K562 (cell line): ENCODE measurements at regions of chr5 and their contacts with region 1.

Region 1: DNA sequence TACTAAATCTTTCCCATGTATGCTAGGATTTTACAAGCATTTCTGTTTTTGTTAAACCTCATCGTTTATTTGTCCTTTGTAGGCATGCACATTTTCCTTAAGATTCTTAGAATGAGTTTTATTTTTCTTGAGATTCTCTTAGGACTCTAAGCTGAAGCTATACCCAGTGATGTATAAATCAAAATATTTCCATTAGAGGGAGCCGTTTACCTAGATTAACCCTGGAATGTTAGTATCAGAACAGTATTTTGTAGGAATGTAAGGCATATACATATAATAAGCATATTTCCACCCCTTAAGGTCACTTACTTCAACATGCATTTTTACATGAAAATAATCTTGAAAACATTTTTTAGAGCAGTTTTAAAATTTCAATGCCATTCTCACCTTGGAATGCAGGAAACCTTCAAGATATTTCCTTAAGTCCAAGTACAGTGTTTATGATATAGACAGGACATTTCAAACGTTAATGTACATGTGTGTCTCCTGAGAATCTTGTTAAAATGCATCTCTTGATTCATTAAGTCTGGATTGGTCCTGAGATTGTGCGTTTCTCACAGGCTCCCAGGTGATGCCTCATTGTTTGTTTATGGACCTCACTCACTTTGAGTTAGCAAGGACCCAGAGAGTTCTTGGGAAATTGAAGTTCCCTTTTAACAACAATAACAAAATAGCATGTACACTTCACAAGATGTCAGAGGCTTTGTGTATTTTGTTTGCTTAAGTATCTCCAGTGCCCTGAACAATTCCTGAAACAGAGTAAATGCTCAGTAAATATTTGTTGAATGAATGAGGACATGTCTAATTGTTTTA is 34.9 kb upstream of the FCHO2 start:
- DNase-seq: peak in 2 of 4 experiments; percentile 36 to 37
- ATAC-seq: peak; percentile 91
- H3K4me3 ChIP-seq: no peak overlapping the region
- H3K27ac ChIP-seq: no peak overlapping the region
- H3K4me1 ChIP-seq: no peaks in the 10 kb centered on the region
- H3K27me3 ChIP-seq: no peaks in the 10 kb centered on the region
- CTCF ChIP-seq: peak in 2 of 3 experiments; percentile 32 to 74; a peak in 3 of 6 replicates
- EP300 ChIP-seq: no peak
- POLR2A ChIP-seq: no peak
- RAD21 ChIP-seq: peak; percentile 72 to 89

Region 2: DNA sequence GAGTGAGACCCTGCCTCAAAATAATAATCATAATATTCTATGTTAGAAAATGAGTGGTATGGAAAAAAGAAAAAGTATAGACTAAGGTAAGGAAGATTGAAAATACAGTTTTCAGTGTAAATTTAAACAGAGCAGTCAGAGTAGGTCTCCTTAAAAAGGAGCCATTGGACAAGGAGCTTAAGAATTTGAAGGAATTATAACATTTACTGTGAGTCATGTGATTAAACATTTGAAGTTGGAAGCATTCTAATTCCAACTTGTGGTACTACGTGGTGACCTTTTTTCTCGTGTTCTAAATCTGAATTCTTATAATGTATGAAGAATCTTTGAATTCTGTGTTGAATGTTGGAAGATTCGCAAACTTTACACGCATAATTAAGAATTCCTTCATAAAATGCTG is 160.2 kb after region 1 on chr5:
- CTCF ChIA-PET with region 1: no interaction called
- POLR2A ChIA-PET with region 1: no interaction called
- in situ Hi-C with region 1: no loop called
- intact Hi-C with region 1: loop called (anchors 5 kb)
- DNase-seq: no peak
- ATAC-seq: no peak
- H3K4me3 ChIP-seq: no peak overlapping the region
- H3K27ac ChIP-seq: no peak overlapping the region
- H3K4me1 ChIP-seq: no peaks in the 10 kb centered on the region
- H3K27me3 ChIP-seq: no peaks in the 10 kb centered on the region
- CTCF ChIP-seq: no peak
- EP300 ChIP-seq: no peak
- POLR2A ChIP-seq: no peak
- RAD21 ChIP-seq: no peak

Region 3: DNA sequence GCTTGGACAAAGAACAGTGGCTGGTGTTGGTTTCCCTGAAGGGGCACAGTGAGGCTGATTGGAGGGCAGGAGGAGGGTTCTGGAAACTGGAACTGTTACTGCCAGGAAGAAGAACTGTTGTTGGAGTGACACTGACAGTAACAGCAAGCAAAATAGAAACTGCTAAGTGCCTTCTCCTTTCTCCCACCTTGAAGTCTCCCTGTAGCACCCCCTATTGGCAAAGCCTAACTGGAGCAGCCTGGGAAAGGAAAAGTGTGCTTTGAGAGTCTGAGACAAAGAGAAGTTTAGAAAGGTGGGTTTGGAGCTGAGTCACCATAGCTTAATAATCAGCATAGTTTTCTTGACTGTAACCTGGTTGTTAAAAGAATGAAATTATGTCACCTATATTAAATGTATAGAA is 249.6 kb after region 1 on chr5:
- CTCF ChIA-PET with region 1: no interaction called
- POLR2A ChIA-PET with region 1: no interaction called
- in situ Hi-C with region 1: no loop called
- intact Hi-C with region 1: loop called (anchors 1 kb)
- DNase-seq: peak; percentile 24 to 57 (median 29)
- ATAC-seq: peak; percentile 83
- H3K4me3 ChIP-seq: no peak overlapping the region
- H3K27ac ChIP-seq: no peak overlapping the region
- H3K4me1 ChIP-seq: no peaks in the 10 kb centered on the region
- H3K27me3 ChIP-seq: peaks cover 10 to 18% of the 10 kb centered on the region in 2 experiments; a peak in 4 of 5 replicates
- CTCF ChIP-seq: peak; percentile 67 to 69 (median 67)
- EP300 ChIP-seq: no peak
- POLR2A ChIP-seq: no peak
- RAD21 ChIP-seq: peak in 1 of 2 experiments; percentile 58; a peak in 2 of 4 replicates

Region 4: GRCh38 chr5:73201547-73202513 is 280.9 kb after region 1 on chr5:
- CTCF ChIA-PET with region 1: interaction called, 7 read pairs
- POLR2A ChIA-PET with region 1: no interaction called
- in situ Hi-C with region 1: loop called (anchors 5 kb)
- intact Hi-C with region 1: loop called (anchors 2 kb)
- DNase-seq: peak; percentile 62 to 84 (median 82)
- ATAC-seq: peak; percentile 99
- H3K4me3 ChIP-seq: no peak overlapping the region
- H3K27ac ChIP-seq: no peak overlapping the region
- H3K4me1 ChIP-seq: peaks cover 0 to 6% of the 10 kb centered on the region in 2 experiments; a peak in 3 of 5 replicates
- H3K27me3 ChIP-seq: peaks cover 20 to 42% of the 10 kb centered on the region in 2 experiments; a peak in 3 of 5 replicates
- CTCF ChIP-seq: peak; percentile 79 to 81 (median 81)
- EP300 ChIP-seq: no peak
- POLR2A ChIP-seq: no peak
- RAD21 ChIP-seq: peak; percentile 50 to 71